Ascending aorta (tissue), 2 donors: ENCODE measurements at regions of chr12 and their contacts with region 1.

Region 1: GRCh38 chr12:85468356-85469157 is 188.5 kb downstream of the ALX1 start:
- DNase-seq: peak in 1 of 2 donors; percentile 65
- H3K4me3 ChIP-seq: peak overlapping the region; percentile 50 to 65
- H3K27ac ChIP-seq: no peak overlapping the region
- H3K4me1 ChIP-seq: no peaks in the 10 kb centered on the region
- H3K27me3 ChIP-seq: no peaks in the 10 kb centered on the region
- CTCF ChIP-seq: peak; percentile 45 to 76 (median 73)

Region 2: DNA sequence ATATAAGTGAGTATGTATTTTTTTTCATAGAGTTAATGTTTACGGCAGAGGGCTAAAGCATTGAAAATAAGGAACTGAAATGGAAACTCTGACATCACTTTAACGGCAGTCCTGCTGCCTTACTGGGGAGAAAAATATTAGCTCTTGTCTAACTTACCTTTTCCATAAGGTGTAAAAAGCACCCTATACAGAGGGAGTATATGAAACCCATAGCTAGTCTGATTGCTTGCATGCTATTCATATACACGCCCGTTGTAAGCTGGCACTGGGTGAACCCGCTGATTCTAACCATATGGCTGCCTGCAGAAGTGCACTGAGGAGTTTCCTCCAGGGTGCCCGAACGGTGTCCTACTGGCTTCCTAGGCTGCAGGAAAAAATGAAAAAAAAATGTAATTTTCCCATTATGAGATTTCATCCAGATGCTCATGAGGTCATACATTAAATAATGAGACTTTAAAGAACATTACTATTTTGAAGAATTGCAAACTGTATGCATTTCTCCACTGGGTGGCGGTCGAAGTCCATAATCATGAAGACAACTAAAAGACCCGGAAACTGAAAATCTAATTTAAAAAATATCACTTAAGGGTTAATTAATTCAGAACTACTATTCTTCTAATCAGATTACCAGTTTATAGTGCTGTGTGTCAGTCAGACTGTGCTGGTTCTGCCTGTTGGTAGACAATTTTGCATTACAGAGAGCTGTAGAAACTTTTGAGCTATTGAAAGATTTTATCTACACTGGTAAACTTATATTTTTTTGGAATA is 43.8 kb before region 1 on chr12:
- intact Hi-C with region 1: no loop called
- DNase-seq: no peak
- H3K4me3 ChIP-seq: no peak overlapping the region
- H3K27ac ChIP-seq: no peak overlapping the region
- H3K4me1 ChIP-seq: no peaks in the 10 kb centered on the region
- H3K27me3 ChIP-seq: no peaks in the 10 kb centered on the region
- CTCF ChIP-seq: peak in 1 of 3 experiments; percentile 24

Region 3: DNA sequence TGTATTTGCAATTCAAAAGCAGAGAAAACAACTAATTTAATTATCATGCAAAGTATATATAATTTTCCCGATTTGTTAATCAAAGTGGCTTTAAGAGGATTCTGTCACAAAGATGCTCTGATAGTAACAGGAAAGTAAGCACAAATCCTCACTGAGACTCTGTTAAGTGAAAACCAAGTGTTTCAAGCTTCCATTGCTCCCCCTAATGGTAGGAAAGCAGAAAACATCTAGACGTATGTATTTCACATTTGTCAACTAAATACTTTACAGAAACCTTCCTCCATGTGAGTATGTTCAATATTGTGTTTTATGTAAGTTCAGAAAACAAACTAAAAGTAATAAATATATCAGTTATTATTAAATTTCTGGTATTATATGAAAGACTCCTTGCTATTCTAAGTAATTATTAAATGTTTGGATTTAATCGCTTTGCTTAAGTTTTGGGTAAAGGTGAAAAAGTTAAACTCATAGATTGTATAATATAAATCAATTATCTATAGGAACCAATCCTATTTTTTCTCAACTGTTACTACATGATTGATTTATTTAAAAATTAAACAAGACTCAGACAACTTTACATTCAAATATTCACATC is 404.0 kb after region 1 on chr12:
- intact Hi-C with region 1: loop called (anchors 2 kb)
- DNase-seq: no peak
- H3K4me3 ChIP-seq: no peak overlapping the region
- H3K27ac ChIP-seq: no peak overlapping the region
- H3K4me1 ChIP-seq: no peaks in the 10 kb centered on the region
- H3K27me3 ChIP-seq: no peaks in the 10 kb centered on the region
- CTCF ChIP-seq: peak in 2 of 3 experiments; percentile 66 to 71